GM12878 (cell line): ENCODE measurements at regions of chr17 and their contacts with region 1.

Region 1: DNA sequence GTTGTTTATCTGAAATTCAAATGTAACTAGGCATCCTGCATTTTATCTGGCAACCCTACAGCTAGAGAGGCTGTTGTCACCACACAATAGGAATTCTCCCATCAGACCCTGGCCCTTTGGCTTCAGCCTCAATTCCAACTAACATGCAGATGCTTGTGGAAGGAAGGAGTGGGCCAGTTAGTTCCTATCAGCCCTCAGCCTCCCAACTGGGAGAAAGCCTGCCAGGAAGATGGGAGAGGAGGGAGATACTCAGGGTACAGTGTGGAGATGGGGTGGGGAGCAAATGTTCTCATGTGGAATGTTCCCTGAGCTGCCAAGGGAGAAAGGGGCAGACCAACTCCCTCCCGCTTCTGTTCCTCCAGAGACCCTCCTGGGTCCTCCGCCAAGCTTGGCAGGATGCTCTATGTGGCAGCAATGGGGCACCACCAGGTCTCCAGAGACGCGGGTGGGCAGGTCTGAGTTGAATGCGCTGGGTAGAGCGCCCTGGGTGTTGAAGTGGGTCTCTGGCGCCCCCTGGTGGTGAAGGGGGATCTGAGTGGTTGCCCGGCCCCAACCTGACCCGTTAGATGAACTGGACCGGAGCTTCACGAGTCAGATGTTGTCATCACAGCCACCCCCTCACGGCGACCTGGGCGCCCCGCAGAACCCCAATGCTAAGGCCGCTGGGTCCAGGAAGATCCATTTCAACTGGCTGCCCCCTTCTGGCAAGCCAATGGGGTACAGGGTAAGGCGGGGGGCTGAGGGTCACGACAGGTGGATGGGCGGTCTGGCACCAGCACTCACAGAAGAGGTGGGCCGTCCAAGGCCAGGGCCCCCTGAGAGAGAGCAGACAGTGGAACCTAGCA is 15.2 kb downstream of the GALK1 start:
- DNase-seq: no peak
- ATAC-seq: peak; percentile 82
- H3K4me3 ChIP-seq: no peak overlapping the region
- H3K27ac ChIP-seq: no peak overlapping the region
- H3K4me1 ChIP-seq: peaks cover 10% of the 10 kb centered on the region
- H3K27me3 ChIP-seq: no peaks in the 10 kb centered on the region
- CTCF ChIP-seq: peak; percentile 85 to 94 (median 88)
- EP300 ChIP-seq: no peak
- POLR2A ChIP-seq: no peak
- RAD21 ChIP-seq: peak; percentile 77

Region 2: GRCh38 chr17:75619506-75620431 is 130.0 kb before region 1 on chr17:
- CTCF ChIA-PET with region 1: interaction called, 43 read pairs
- POLR2A ChIA-PET with region 1: no interaction called
- RAD21 ChIA-PET with region 1: interaction called, 6 read pairs
- SMC1A ChIA-PET with region 1: interaction called, 3 read pairs
- in situ Hi-C with region 1: no loop called
- intact Hi-C with region 1: no loop called
- DNase-seq: no peak
- ATAC-seq: peak; percentile 68
- H3K4me3 ChIP-seq: no peak overlapping the region
- H3K27ac ChIP-seq: no peak overlapping the region
- H3K4me1 ChIP-seq: no peaks in the 10 kb centered on the region
- H3K27me3 ChIP-seq: no peaks in the 10 kb centered on the region
- CTCF ChIP-seq: peak; percentile 33 to 71 (median 39)
- EP300 ChIP-seq: no peak
- POLR2A ChIP-seq: 0 out of 2 replicates have a peak, but pooled peaks have one; percentile 10
- RAD21 ChIP-seq: no peak

Region 3: DNA sequence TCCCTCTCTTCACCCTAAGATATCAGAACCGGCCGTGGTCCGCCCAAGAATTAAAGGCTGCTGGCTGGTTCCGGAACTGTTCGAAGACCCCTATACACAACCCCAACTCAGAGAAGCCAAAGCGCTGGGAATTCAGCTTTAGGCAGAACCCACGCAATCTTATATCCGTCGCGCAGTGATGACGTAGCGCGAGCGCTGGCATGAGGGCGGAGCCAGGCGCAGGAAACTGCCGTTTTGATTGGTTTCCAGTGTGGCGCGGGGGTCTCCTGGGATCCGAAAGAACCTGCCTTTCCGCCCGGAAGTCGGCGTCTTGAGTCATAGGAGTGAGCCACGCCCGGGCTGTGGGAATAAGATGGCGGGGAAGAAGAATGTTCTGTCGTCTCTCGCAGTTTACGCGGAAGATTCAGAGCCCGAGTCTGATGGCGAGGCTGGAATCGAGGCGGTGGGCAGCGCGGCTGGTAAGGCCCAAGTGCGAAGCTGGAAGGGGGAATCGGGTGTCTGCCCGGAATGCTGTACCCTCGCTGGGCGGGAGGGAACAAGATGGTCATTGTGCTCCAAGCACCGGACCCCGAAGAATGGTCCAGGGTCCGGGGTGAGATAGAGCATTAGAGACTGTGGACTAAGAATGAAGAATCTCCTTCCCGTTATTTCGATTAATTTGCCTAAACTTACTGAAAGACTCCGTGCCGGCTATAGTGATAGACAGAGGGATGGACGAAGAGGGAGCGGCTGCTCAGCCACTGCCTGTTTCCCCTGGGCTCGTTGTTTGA is 82.6 kb before region 1 on chr17 and contains the starts of genes RECQL5 and SAP30BP:
- CTCF ChIA-PET with region 1: interaction called, 197 read pairs
- POLR2A ChIA-PET with region 1: interaction called, 5 read pairs
- RAD21 ChIA-PET with region 1: interaction called, 79 read pairs
- SMC1A ChIA-PET with region 1: interaction called, 72 read pairs
- in situ Hi-C with region 1: loop called (anchors 5 kb)
- intact Hi-C with region 1: no loop called
- DNase-seq: peak; percentile 90
- ATAC-seq: peak; percentile 89
- H3K4me3 ChIP-seq: peak within 1 kb of the TSS; percentile 79
- H3K27ac ChIP-seq: peak within 1 kb of the TSS; percentile 81
- H3K4me1 ChIP-seq: peaks cover 23% of the 10 kb centered on the region
- H3K27me3 ChIP-seq: no peaks in the 10 kb centered on the region
- CTCF ChIP-seq: no peak
- EP300 ChIP-seq: peak in 1 of 2 experiments; percentile 24; a peak in 1 of 4 replicates
- POLR2A ChIP-seq: peak; percentile 90
- RAD21 ChIP-seq: no peak
- polyA plus RNA-seq, gene RECQL5: 3.6 to 6.4 TPM
- polyA plus RNA-seq, gene SAP30BP: 149 to 166 TPM

Region 4: GRCh38 chr17:75720725-75721462 is 28.9 kb before region 1 on chr17 and contains the start of gene ITGB4:
- CTCF ChIA-PET with region 1: interaction called, 17 read pairs
- POLR2A ChIA-PET with region 1: no interaction called
- RAD21 ChIA-PET with region 1: no interaction called
- SMC1A ChIA-PET with region 1: interaction called, 4 read pairs
- in situ Hi-C with region 1: no loop called
- intact Hi-C with region 1: no loop called
- DNase-seq: no peak
- ATAC-seq: peak; percentile 88
- H3K4me3 ChIP-seq: peak within 1 kb of the TSS; percentile 55; the same call in 1 of the 2 replicates
- H3K27ac ChIP-seq: no peak within 1 kb of the TSS
- H3K4me1 ChIP-seq: no peaks in the 10 kb centered on the region
- H3K27me3 ChIP-seq: peaks cover 0 to 1% of the 10 kb centered on the region in 2 experiments; a peak in 2 of 4 replicates
- CTCF ChIP-seq: 0 out of 6 replicates have a peak, but pooled peaks of 1 of the 3 experiments have one; percentile 2
- EP300 ChIP-seq: no peak
- POLR2A ChIP-seq: no peak
- RAD21 ChIP-seq: no peak
- polyA plus RNA-seq, gene ITGB4: not detected

Region 5: DNA sequence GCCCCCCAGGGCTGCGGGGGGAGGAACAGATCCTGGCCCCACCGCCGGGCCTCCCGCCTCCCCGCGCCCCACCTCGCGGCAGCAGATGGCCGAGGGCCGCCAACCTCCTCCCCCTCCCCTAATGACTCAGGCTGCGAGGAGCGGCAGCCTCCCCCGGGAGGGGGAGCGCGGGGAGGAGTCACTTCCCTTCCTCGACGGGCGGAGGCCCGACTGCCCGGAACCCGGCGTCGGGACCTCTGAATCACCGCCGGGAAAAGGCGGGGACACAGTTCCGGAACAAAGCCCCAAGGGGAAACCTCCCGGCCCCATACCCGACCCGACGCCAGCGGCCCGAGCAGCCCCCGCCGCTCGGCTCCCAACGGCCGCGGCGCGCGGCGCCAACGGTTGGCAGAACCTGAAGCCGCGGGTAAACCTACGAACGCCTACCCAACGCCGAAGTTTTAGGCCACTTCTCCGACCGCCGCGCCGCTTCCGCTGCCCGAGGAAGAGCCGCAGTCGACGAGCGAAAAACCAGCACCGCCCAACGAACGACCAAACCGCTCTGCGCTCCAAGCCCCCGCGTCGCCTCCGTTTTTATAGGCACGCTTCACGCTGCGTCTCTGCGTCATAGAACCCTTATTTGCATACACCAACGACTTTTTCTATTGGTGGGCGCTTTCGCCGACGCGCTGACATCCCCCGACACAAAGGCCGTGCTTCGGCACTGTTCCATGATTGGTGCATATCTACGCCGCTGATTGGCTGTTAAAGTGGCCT is 29.6 kb after region 1 on chr17:
- CTCF ChIA-PET with region 1: interaction called, 22 read pairs
- POLR2A ChIA-PET with region 1: interaction called, 12 read pairs
- RAD21 ChIA-PET with region 1: interaction called, 6 read pairs
- SMC1A ChIA-PET with region 1: interaction called, 6 read pairs
- in situ Hi-C with region 1: no loop called
- intact Hi-C with region 1: no loop called
- DNase-seq: peak; percentile 100
- ATAC-seq: peak; percentile 81
- H3K4me3 ChIP-seq: peak overlapping the region; percentile 88
- H3K27ac ChIP-seq: peak overlapping the region; percentile 90
- H3K4me1 ChIP-seq: peaks cover 16% of the 10 kb centered on the region
- H3K27me3 ChIP-seq: no peaks in the 10 kb centered on the region
- CTCF ChIP-seq: no peak
- EP300 ChIP-seq: peak in 1 of 2 experiments; percentile 24; a peak in 1 of 4 replicates
- POLR2A ChIP-seq: peak; percentile 100
- RAD21 ChIP-seq: no peak

Region 6: GRCh38 chr17:75845049-75845860 is 95.5 kb after region 1 on chr17:
- CTCF ChIA-PET with region 1: interaction called, 48 read pairs
- POLR2A ChIA-PET with region 1: interaction called, 3 read pairs
- RAD21 ChIA-PET with region 1: interaction called, 8 read pairs
- SMC1A ChIA-PET with region 1: interaction called, 3 read pairs
- in situ Hi-C with region 1: no loop called
- intact Hi-C with region 1: no loop called
- DNase-seq: peak; percentile 81
- ATAC-seq: peak; percentile 89
- H3K4me3 ChIP-seq: peak overlapping the region; percentile 77; the same call in 1 of the 2 replicates
- H3K27ac ChIP-seq: peak overlapping the region; percentile 93
- H3K4me1 ChIP-seq: peaks cover 14% of the 10 kb centered on the region
- H3K27me3 ChIP-seq: no peaks in the 10 kb centered on the region
- CTCF ChIP-seq: peak; percentile 71 to 92 (median 89)
- EP300 ChIP-seq: 0 out of 4 replicates have a peak, but pooled peaks of 1 of the 2 experiments have one; percentile 20
- POLR2A ChIP-seq: peak; percentile 59; the same call in 1 of the 2 replicates
- RAD21 ChIP-seq: peak; percentile 50

Region 7: GRCh38 chr17:75896415-75897159 is 146.8 kb after region 1 on chr17 and contains the start of gene TRIM65:
- CTCF ChIA-PET with region 1: interaction called, 5 read pairs
- POLR2A ChIA-PET with region 1: interaction called, 4 read pairs
- RAD21 ChIA-PET with region 1: interaction called, 16 read pairs
- SMC1A ChIA-PET with region 1: interaction called, 6 read pairs
- in situ Hi-C with region 1: no loop called
- intact Hi-C with region 1: no loop called
- DNase-seq: no peak
- ATAC-seq: peak; percentile 91
- H3K4me3 ChIP-seq: peak within 1 kb of the TSS; percentile 89
- H3K27ac ChIP-seq: peak within 1 kb of the TSS; percentile 72
- H3K4me1 ChIP-seq: peaks cover 6% of the 10 kb centered on the region
- H3K27me3 ChIP-seq: no peaks in the 10 kb centered on the region
- CTCF ChIP-seq: peak; percentile 27 to 74 (median 39); a peak in 4 of 6 replicates
- EP300 ChIP-seq: no peak
- POLR2A ChIP-seq: peak; percentile 93
- RAD21 ChIP-seq: peak; percentile 38; the same call in 1 of the 2 replicates
- polyA plus RNA-seq, gene TRIM65: 1.4 to 3.8 TPM